Calu3 (cell line): ENCODE measurements at regions of chr17 and their contacts with region 1.

Region 1: DNA sequence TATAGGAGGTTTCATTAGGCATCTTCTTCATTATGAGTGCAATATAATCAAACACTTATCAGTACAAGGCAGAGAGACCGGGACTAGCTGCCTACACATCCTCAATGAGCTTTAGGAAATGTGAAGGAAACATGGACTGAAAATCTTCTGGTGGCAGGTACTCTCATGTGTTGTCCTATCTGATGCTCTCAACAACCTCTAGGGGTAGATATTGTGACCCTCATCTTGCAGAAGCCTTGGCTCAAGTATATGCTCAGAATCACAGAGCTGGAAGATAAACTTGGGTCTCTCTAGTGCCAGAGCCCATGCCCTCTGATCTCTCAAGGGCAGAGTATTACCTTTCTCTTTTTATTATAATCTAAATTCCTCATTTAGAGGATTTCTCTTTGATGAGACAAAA is 181.6 kb upstream of the C17orf78 start:
- DNase-seq: no peak
- H3K4me3 Mint-ChIP-seq: no peak overlapping the region
- H3K27ac Mint-ChIP-seq: no peak overlapping the region
- H3K4me1 Mint-ChIP-seq: no peaks in the 10 kb centered on the region
- H3K27me3 Mint-ChIP-seq: no peaks in the 10 kb centered on the region
- CTCF ChIP-seq: no peak

Region 2: DNA sequence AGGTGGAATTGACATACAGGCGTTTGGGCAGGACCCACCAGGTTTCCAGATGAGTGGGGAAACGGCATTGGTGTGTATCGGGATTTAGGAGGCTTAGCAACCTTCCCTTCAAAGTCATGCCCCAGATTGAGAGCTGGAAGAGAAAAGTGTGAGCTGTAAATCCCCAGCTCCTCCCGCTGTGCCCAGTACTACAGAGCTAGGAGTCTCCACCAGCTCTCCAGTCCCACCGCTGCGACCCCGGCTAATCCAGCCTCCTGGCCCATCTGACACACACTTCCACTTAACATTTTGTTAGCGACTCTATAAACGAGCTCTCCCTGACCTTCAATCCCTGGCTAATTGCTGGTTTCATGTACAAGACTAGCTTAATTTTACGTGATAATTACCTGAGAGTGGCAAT is 286.8 kb before region 1 on chr17:
- CTCF ChIA-PET with region 1: no interaction called
- intact Hi-C with region 1: no loop called
- DNase-seq: no peak
- H3K4me3 Mint-ChIP-seq: no peak overlapping the region
- H3K27ac Mint-ChIP-seq: no peak overlapping the region
- H3K4me1 Mint-ChIP-seq: no peaks in the 10 kb centered on the region
- H3K27me3 Mint-ChIP-seq: peaks cover 64% of the 10 kb centered on the region
- CTCF ChIP-seq: no peak

Region 3: DNA sequence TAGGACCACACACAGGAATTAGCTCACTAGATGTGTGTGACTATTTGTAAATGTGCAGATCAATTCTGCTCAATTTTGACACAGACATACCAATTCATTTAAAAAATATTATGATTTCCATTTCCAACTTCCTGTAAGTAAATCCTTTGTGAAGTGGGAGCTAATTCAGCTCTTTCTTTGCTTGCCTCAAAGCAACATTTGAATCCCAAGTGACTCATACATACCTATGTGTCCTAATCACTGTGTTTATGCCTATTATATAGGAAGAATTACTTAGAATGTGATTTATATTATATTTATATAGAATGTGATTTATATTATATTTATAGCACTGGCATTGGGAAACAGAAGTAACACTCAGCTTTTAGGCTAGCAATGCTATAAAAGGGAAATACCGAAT is 14.3 kb before region 1 on chr17:
- CTCF ChIA-PET with region 1: interaction called, 8 read pairs
- intact Hi-C with region 1: loop called (anchors 2 kb)
- DNase-seq: no peak
- H3K4me3 Mint-ChIP-seq: no peak overlapping the region
- H3K27ac Mint-ChIP-seq: no peak overlapping the region
- H3K4me1 Mint-ChIP-seq: peaks cover 29% of the 10 kb centered on the region
- H3K27me3 Mint-ChIP-seq: no peaks in the 10 kb centered on the region
- CTCF ChIP-seq: no peak

Region 4: DNA sequence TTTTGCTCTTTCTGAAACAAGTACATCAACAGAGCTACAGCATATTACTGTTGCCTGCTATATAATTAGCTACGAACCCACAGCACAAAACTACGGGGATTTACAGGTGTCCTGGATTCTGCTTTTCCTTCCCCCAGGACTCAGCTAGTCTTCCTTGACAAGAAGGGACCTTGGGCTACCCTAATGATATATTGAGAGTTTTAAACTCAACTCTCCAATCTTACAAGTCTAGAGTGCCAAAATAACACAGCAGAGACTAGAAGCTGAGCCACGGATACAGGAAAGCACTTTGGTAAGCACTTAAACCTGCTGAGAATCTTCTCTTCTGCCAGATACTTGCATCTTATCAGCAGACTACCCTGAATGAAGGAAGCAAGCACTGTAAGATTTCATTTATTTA is 20.2 kb after region 1 on chr17:
- CTCF ChIA-PET with region 1: interaction called, 9 read pairs
- intact Hi-C with region 1: loop called (anchors 2 kb)
- DNase-seq: no peak
- H3K4me3 Mint-ChIP-seq: no peak overlapping the region
- H3K27ac Mint-ChIP-seq: no peak overlapping the region
- H3K4me1 Mint-ChIP-seq: no peaks in the 10 kb centered on the region
- H3K27me3 Mint-ChIP-seq: no peaks in the 10 kb centered on the region
- CTCF ChIP-seq: no peak

Region 5: DNA sequence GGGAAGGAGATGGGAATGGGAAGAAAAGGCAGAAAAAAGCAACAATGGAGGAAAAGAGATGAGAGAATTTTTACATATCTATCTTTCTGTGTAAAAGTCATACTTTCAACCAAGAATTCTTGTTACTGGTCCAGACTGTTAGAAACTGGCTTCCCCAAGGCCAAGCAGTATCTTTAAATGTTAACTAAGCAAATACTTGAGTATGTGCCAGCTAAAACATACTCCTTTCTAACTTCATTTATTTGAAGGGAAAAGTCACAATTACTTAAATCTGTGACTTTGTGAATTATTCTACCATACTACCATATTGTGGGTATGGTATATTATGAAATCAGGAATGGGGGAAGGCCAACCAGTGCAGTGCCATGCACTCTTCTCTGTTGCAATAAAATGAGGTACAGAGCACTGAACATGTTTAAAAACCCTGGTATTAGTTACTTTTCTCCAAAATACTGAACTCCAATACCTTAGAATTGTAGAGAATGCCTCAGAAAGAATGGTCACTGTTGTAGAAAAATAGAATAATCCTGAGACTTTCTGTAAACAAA is 89.3 kb after region 1 on chr17:
- CTCF ChIA-PET with region 1: no interaction called
- intact Hi-C with region 1: no loop called
- DNase-seq: no peak
- H3K4me3 Mint-ChIP-seq: no peak overlapping the region
- H3K27ac Mint-ChIP-seq: no peak overlapping the region
- H3K4me1 Mint-ChIP-seq: peaks cover 12% of the 10 kb centered on the region
- H3K27me3 Mint-ChIP-seq: no peaks in the 10 kb centered on the region
- CTCF ChIP-seq: no peak

Region 6: DNA sequence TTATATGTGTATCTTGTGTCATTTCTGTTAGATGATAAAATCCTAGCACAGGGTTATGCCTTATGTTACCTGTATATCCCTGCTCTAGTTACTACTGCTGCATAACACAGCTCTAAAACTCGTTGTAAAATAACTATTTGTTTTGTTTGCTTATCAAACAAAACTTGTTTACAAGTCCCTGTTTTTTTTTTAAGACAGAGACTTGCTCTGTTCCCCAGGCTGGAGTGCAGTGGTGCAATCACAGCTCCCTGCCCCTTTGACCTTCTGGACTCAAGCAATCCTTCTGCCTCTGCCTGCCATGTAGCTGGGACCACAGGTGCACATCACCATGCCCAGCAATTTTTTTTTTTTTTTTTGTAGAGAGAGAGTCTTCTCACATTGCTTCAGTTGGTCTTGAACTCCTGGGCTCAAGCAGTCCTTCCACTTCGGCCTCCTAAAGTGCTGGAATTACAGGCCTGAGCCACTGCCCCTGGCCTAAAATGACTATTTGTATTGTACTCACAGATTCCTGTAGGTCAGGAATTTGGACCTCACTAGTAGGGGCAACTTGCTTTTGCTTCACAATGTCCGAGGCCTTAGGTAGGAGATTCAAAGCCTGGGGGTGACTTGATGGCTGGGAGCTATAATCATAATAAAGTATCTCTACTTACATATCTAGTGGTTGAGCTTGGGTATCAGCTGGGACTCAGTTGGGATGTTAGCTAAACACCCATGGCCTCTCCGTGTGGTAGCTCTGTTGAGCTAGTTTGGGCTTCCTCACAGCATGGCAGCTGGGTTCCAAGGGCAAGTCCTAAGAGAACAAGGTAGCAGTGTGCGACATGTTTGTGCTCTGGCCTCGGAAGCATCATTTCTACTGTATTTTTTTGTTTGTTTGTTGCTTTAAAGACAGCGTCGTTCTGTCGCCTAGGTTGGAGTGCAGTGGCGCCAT is 308.1 kb after region 1 on chr17:
- CTCF ChIA-PET with region 1: no interaction called
- intact Hi-C with region 1: no loop called
- DNase-seq: no peak
- H3K4me3 Mint-ChIP-seq: no peak overlapping the region
- H3K27ac Mint-ChIP-seq: no peak overlapping the region
- H3K4me1 Mint-ChIP-seq: peaks cover 5% of the 10 kb centered on the region
- H3K27me3 Mint-ChIP-seq: no peaks in the 10 kb centered on the region
- CTCF ChIP-seq: no peak